Ascending aorta (tissue), 2 donors: ENCODE measurements at regions of chr1 and their contacts with region 1.

Region 1: DNA sequence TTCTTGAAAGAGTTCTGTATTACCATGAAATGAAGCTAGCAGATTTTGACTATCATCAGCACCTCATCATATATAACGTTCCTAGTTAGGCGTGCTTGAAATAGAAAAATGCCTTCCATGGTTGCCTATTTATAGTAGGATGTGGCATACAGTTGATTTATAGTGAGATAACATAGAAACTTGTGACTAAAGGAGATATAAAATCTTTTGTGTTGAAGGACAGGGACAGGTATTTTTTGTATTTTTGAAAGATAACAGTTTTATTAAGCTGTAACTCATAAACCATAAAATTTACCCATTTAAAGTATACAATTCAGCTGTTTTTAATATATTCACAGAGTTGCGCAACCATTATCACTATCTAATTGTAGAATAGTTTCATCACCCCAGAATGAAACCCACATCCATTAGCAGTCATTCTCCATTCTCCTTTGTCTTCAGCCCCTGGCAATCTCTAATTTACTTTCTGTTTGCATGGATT is 19.3 kb downstream of the SPEN start:
- DNase-seq: no peak
- H3K4me3 ChIP-seq: no peak overlapping the region
- H3K27ac ChIP-seq: no peak overlapping the region
- H3K4me1 ChIP-seq: peaks cover 3 to 31% of the 10 kb centered on the region in 2 donors
- H3K27me3 ChIP-seq: no peaks in the 10 kb centered on the region
- CTCF ChIP-seq: no peak

Region 2: DNA sequence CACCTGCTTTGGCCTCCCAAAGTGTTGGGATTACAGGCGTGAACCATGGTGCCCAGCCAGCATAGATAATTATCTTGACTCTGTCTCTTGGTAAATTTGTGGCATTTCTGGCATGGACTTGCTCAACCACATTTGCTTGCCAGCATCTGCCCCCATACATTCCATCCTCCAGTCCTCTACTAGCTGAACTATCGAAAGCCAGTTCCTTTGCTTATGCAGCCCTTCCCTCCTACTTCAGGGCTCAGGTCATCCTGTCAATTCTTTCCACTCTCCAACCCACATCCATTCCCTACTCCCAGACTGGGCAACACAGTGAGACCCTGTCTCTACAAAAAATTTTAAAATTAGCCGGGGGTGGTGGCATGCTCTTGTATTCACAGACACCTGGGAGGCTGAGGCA is 46.3 kb before region 1 on chr1:
- intact Hi-C with region 1: loop called (anchors 5 kb)
- DNase-seq: no peak
- H3K4me3 ChIP-seq: no peak overlapping the region
- H3K27ac ChIP-seq: no peak overlapping the region
- H3K4me1 ChIP-seq: peaks cover 0 to 15% of the 10 kb centered on the region in 2 donors
- H3K27me3 ChIP-seq: no peaks in the 10 kb centered on the region
- CTCF ChIP-seq: no peak